Testis (tissue), 5 donors: ENCODE measurements at regions of chr1 and their contacts with region 1.

Region 1: DNA sequence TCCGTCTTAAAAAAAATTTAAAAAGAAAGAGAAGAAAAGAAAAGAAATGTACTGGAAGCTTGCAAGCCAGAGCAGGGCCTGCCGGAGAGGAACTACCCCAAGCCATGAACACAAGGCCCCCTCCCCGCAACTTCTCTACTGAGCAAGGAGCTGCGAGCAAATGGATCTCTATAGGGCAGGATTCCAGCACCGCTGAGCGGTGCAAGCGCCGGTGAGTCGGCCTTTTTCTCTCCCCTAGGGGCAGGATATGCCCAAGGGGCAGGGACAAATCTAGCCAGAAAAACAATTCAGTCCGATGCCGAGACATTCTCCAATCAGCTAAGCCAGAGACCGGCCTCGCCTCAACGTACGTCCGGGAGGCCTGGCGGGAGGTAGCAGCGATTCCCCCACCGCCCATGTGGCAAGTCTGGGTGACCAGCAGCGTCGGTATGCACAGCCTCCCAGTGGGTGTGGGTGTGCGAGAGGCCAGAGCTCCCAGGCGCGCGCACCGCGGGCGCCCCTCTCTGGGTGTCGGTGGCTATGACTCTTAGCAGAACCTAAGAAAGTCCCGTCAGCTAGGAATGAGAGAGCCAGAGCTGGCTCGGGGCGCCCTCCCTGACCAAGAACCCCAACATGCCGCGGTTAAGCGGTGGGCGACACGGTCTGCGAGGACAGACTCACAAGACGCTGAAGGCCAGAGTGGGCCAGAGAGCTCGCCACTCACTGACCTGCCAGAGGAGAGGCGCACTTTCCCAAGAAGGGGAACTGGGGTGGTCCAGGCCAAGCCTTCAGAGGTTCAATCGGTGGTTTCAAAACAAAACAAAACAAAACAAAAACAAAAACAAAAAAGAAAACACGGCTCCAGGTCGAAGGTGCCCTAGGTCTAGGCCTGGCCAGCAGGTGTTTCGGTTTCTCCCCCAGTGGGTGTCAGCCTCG is 1.9 kb downstream of the CSMD2 start:
- DNase-seq: peak; percentile 82
- H3K4me3 ChIP-seq: peak overlapping the region; percentile 40 to 56
- H3K27ac ChIP-seq: no peak overlapping the region
- H3K4me1 ChIP-seq: peaks cover 19% of the 10 kb centered on the region
- H3K27me3 ChIP-seq: no peaks in the 10 kb centered on the region
- CTCF ChIP-seq: peak; percentile 45 to 70 (median 53)
- POLR2A ChIP-seq: no peak

Region 2: GRCh38 chr1:33735621-33736020 is 427.5 kb before region 1 on chr1:
- intact Hi-C with region 1: loop called (anchors 10 kb)
- DNase-seq: no peak
- H3K4me3 ChIP-seq: no peak overlapping the region
- H3K27ac ChIP-seq: no peak overlapping the region
- H3K4me1 ChIP-seq: no peaks in the 10 kb centered on the region
- H3K27me3 ChIP-seq: no peaks in the 10 kb centered on the region
- CTCF ChIP-seq: peak; percentile 38 to 48 (median 39)
- POLR2A ChIP-seq: no peak

Region 3: GRCh38 chr1:34292472-34292871 is 129.4 kb after region 1 on chr1:
- intact Hi-C with region 1: no loop called
- DNase-seq: peak; percentile 15
- H3K4me3 ChIP-seq: no peak overlapping the region
- H3K27ac ChIP-seq: no peak overlapping the region
- H3K4me1 ChIP-seq: no peaks in the 10 kb centered on the region
- H3K27me3 ChIP-seq: no peaks in the 10 kb centered on the region
- CTCF ChIP-seq: no peak
- POLR2A ChIP-seq: no peak

Region 4: GRCh38 chr1:34578306-34578705 is 415.2 kb after region 1 on chr1:
- intact Hi-C with region 1: no loop called
- DNase-seq: no peak
- H3K4me3 ChIP-seq: no peak overlapping the region
- H3K27ac ChIP-seq: no peak overlapping the region
- H3K4me1 ChIP-seq: no peaks in the 10 kb centered on the region
- H3K27me3 ChIP-seq: no peaks in the 10 kb centered on the region
- CTCF ChIP-seq: no peak
- POLR2A ChIP-seq: no peak